ENCODE measurements at regions of chr20 and their contacts with region 1.

Region 1: DNA sequence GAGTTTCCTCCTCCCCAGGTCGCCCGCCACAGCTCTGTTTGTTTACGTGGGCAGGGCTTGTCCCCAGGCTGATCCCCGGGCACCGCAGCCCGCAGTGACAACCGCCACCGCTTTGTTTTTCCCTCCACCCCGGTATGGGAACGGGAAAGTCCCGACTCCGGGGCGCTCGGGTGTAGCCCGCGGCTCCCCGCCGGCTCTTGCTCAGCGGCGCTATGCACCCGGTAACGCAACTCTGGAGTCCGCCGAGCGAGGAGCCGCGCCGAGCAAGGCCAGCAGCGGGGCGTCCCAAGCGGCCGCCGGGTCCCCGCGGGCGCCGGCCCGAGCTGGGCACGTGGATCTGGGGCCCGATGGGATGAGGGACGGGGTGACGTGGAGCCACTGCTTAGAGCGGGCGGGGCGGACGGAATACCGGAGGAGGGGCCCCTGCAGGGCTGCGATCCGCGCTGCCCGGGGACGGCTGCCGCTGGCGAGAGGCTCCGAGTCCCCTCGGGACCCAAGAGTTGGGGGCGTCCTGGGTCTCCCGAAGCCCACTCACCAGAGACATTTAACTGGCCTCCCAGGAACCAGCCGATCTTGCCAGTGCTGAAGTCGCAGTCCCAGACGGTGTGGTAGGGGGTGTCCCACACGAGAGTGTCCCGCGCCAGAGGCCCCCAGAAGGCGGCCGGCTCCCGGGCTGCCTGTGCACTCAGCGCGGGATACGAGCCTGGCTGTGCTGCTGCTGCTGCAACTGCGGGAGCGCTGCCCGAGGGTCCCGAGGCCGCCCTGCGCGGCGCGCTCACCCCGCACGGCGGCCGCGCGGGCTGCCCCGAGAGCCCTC is 497 bp downstream of the ACSS1 start:
- DNase-seq: peak; percentile 67 to 74
- ATAC-seq: peak; percentile 65 to 70
- H3K4me3 ChIP-seq: peak overlapping the region; percentile 72 to 93 (median 80)
- H3K27ac ChIP-seq: peak overlapping the region; percentile 87 to 95 (median 94)
- H3K4me1 ChIP-seq: peaks cover 44 to 55% of the 10 kb centered on the region in 2 donors
- H3K27me3 ChIP-seq: no peaks in the 10 kb centered on the region
- CTCF ChIP-seq: peak in 1 of 5 experiments; percentile 5
- POLR2A ChIP-seq: peak; percentile 89 to 92

Region 2: GRCh38 chr20:23161968-23162696 is 1895.3 kb before region 1 on chr20:
- in situ Hi-C with region 1: no loop called
- intact Hi-C with region 1: loop called (anchors 5 kb)
- DNase-seq: peak; percentile 92 to 97
- ATAC-seq: peak; percentile 90 to 94
- H3K4me3 ChIP-seq: no peak overlapping the region
- H3K27ac ChIP-seq: peak overlapping the region; percentile 77 to 83 (median 78)
- H3K4me1 ChIP-seq: peaks cover 44 to 56% of the 10 kb centered on the region in 2 donors
- H3K27me3 ChIP-seq: no peaks in the 10 kb centered on the region
- CTCF ChIP-seq: no peak
- POLR2A ChIP-seq: peak in 1 of 2 donors; percentile 21

Region 3: GRCh38 chr20:23357767-23358591 is 1699.5 kb before region 1 on chr20:
- in situ Hi-C with region 1: no loop called
- intact Hi-C with region 1: loop called (anchors 5 kb)
- DNase-seq: peak; percentile 100
- ATAC-seq: peak; percentile 72 to 78
- H3K4me3 ChIP-seq: peak overlapping the region; percentile 76 to 91 (median 78)
- H3K27ac ChIP-seq: peak overlapping the region; percentile 97 to 99 (median 98)
- H3K4me1 ChIP-seq: peaks cover 29% of the 10 kb centered on the region in 2 donors
- H3K27me3 ChIP-seq: no peaks in the 10 kb centered on the region
- CTCF ChIP-seq: peak in 2 of 5 experiments; percentile 18 to 45
- POLR2A ChIP-seq: peak; percentile 79 to 89

Region 4: DNA sequence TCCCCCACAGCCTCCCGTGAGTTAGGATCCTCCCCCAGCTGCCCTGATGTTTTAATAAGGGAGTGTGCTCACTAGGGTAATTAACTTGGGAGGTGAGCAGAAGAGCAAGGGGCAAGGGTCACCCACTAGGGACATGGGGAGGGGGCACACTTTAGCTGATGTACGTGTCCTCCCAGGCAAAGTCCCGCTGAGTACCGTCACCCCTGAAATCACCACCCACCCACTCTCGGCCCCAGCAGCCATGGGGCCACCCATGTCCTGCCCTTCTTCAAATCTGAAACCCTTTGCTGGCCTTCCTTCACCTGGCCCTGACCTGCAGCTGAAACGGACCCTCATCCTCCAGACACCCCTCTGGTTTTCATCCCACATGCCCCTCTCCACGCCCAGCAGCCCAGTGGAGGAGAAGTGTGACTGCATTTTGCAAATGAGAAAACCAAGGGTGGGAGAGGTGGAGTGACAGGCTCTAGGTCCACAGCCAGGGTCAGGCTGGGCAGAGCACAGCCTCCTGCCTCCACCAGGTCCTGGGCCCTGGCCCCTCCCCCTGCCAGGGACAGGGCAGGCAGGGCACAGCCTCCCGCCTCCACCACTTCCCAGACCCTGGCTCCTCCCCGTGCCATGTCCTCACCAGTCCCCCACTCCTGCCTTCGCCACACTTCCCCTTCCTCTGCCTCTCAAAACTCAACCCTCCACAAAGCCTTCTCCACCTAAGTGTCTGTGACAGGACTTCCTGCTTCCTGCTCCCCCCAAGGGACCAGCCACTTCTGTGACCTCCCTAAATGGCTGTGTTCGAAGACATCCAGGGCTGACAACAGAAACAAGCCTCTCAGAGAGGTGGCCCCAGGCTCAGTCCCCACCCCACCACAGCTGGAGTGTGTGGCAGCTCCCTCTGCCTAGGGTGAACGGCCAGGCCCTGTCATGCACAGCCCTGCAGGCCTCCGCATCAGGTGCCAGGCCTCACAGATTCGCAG is 14.6 kb before region 1 on chr20:
- in situ Hi-C with region 1: no loop called
- intact Hi-C with region 1: loop called (anchors 2 kb)
- DNase-seq: no peak
- ATAC-seq: no peak
- H3K4me3 ChIP-seq: no peak overlapping the region
- H3K27ac ChIP-seq: peak overlapping the region; percentile 92 to 95 (median 95)
- H3K4me1 ChIP-seq: peaks cover 97 to 100% of the 10 kb centered on the region in 2 donors
- H3K27me3 ChIP-seq: no peaks in the 10 kb centered on the region
- CTCF ChIP-seq: no peak
- POLR2A ChIP-seq: no peak

Region 5: GRCh38 chr20:25090492-25091429 is 33.3 kb after region 1 on chr20:
- in situ Hi-C with region 1: no loop called
- intact Hi-C with region 1: no loop called
- DNase-seq: peak in 1 of 2 donors; percentile 26
- ATAC-seq: no peak
- H3K4me3 ChIP-seq: no peak overlapping the region
- H3K27ac ChIP-seq: no peak overlapping the region
- H3K4me1 ChIP-seq: no peaks in the 10 kb centered on the region
- H3K27me3 ChIP-seq: peaks cover 19 to 28% (median 23%) of the 10 kb centered on the region in 3 donors
- CTCF ChIP-seq: no peak
- POLR2A ChIP-seq: no peak

Measured in gastrocnemius medialis (tissue), 4 donors.